ENCODE measurements at regions of chr17 and their contacts with region 1.

Region 1: GRCh38 chr17:47889734-47890529 is 6.1 kb upstream of the SP2 start:
- DNase-seq: peak; percentile 92
- ATAC-seq: peak; percentile 93 to 95
- H3K4me3 ChIP-seq: no peak overlapping the region
- H3K27ac ChIP-seq: no peak overlapping the region
- H3K4me1 ChIP-seq: peaks cover 15% of the 10 kb centered on the region
- H3K27me3 ChIP-seq: no peaks in the 10 kb centered on the region
- CTCF ChIP-seq: peak; percentile 98

Region 2: DNA sequence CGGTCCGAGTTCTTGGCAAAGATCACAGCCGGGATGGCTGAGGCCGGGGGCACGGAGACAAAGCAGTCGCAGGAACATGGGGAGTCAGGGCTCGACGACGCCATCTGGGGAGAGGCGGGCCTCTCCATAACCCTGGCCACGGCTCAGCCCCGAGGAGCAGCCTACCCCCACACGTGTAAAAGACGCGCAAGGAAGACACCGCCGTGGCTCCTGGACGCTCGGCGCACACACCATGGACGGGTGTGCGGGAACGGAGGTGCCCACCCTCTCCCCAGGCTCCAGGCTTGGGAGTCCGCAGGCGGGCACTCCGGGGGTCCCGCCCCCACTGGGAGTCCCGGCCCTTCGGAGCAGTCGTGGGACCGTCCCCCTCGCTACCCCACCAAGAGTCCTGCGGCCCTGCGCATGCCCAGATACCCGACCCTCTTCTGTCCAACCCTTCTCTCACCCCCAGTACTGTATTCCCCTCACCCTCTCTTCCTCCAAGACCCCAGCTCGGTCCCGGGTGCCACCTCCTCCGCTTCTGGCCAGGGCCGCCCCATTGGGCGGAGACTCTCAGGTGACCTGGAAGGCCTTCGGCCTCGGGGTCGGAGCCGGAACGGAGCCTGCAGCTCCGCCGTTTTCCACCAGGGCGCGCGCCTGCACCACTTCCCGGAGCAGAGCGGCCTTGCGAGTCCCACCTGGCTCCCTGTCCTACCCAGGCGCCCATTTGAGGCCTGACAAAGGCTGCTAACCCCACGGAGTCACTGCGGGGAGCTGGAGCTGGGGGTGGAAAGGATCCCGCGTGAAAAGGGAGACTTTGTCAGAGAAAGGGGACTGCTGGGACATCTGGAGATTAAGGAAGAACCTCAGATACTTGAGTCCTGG is 49.0 kb before region 1 on chr17 and contains the start of gene SCRN2:
- intact Hi-C with region 1: loop called (anchors 5 kb)
- DNase-seq: peak; percentile 94
- ATAC-seq: peak; percentile 95 to 97
- H3K4me3 ChIP-seq: peak within 1 kb of the TSS; percentile 99
- H3K27ac ChIP-seq: peak within 1 kb of the TSS; percentile 75
- H3K4me1 ChIP-seq: peaks cover 65% of the 10 kb centered on the region
- H3K27me3 ChIP-seq: peaks cover 20% of the 10 kb centered on the region
- CTCF ChIP-seq: peak; percentile 97
- total RNA-seq, gene SCRN2: 30.9 TPM

Measured in lower lobe of right lung (tissue), 2 donors.